PC-9 (cell line): ENCODE measurements at regions of chr21 and their contacts with region 1.

Region 1: GRCh38 chr21:15729674-15730483 is at the start of gene USP25:
- DNase-seq: peak; percentile 64 to 83
- H3K4me3 ChIP-seq: peak within 1 kb of the TSS; percentile 79
- H3K27ac ChIP-seq: peak within 1 kb of the TSS; percentile 68
- H3K4me1 ChIP-seq: peaks cover 16% of the 10 kb centered on the region; the same call in 1 of the 2 replicates
- H3K27me3 ChIP-seq: no peaks in the 10 kb centered on the region
- CTCF ChIP-seq: no peak
- total RNA-seq, gene USP25: 26.0 and 30.9 TPM in 2 replicates

Region 2: DNA sequence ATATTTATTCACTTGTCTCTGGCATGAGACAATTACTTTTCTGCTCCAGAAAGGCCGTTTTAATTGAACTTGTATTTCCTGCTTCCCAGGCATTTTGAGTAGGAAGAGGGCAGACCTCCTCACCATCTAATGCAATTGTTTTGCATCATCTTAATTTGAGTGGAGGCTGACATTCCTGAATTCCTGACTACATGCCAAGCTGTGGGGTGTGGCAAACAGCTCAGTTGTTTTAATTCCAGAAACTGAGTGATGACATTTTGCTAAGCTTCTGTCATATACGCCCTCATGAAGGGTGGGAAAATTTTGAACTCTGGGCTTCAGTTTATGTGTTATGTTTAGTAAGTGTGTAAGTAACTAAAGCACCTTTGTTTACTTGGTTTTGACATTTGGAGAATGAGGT is 125.5 kb before region 1 on chr21:
- CTCF ChIA-PET with region 1: no interaction called
- POLR2A ChIA-PET with region 1: interaction called, 5 read pairs
- intact Hi-C with region 1: loop called (anchors 5 kb)
- DNase-seq: peak; percentile 61 to 82
- H3K4me3 ChIP-seq: no peak overlapping the region
- H3K27ac ChIP-seq: peak overlapping the region; percentile 50
- H3K4me1 ChIP-seq: peaks cover 14% of the 10 kb centered on the region
- H3K27me3 ChIP-seq: no peaks in the 10 kb centered on the region
- CTCF ChIP-seq: no peak

Region 3: DNA sequence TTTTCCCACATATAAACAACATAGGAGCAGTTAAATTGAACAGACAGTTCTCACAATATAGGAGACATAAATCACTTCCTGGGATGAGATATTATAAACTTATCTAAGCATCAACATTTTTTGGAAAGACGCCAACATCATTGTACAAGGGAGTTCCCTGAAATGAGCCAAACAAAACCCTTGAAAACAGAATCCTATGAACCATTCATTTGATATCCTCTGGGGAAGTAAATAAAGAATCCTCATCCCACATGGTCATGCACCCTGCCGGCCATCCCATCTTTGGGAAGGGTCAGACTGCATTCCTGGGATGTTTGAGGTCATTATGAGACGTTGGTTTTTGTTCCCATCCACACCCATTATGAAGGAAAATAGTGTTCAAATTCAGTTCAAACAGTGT is 111.9 kb before region 1 on chr21:
- CTCF ChIA-PET with region 1: no interaction called
- POLR2A ChIA-PET with region 1: no interaction called
- intact Hi-C with region 1: loop called (anchors 1 kb)
- DNase-seq: peak; percentile 57 to 61
- H3K4me3 ChIP-seq: no peak overlapping the region
- H3K27ac ChIP-seq: peak overlapping the region; percentile 52
- H3K4me1 ChIP-seq: peaks cover 13% of the 10 kb centered on the region
- H3K27me3 ChIP-seq: no peaks in the 10 kb centered on the region
- CTCF ChIP-seq: no peak

Region 4: DNA sequence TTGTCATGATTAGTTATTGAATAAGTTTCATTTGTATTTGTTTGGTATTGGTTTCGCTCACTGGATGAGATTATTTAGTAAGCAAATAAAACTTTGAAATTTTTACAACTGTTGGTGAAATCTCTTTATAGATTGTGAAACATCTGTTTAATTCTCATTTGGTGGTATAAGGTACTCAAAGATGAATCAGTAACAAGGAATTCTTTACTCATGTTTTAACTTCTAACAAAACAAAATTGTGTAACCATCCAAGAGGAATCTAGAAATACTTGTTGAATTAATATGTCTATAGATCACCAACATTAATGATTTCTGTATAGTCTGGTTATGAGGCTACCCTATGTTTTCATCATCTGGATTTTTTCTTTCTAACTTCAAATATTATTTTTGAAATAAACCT is 62.9 kb before region 1 on chr21:
- CTCF ChIA-PET with region 1: no interaction called
- POLR2A ChIA-PET with region 1: interaction called, 5 read pairs
- intact Hi-C with region 1: loop called (anchors 5 kb)
- DNase-seq: peak in 1 of 2 experiments; percentile 92
- H3K4me3 ChIP-seq: no peak overlapping the region
- H3K27ac ChIP-seq: peak overlapping the region; percentile 88
- H3K4me1 ChIP-seq: peaks cover 25% of the 10 kb centered on the region
- H3K27me3 ChIP-seq: no peaks in the 10 kb centered on the region
- CTCF ChIP-seq: no peak

Region 5: DNA sequence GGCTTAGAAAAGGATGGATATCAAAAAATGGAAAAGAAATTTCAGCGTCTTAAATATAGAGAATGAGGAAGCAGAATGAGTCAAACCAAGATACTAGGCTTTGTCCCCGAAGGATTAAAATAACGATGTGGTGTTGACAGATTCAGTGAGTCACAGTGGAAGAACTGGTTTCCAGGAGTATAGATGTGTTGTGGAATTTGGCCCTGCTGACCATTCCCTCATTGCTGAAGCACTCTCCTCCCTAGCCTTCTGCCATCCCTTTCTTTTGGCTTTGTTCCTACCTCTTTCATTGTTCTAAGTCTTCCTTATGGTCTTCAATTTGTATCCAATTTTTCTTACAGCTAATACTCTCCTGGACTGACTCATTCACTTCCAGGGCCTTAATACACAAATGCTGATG is 23.2 kb before region 1 on chr21:
- CTCF ChIA-PET with region 1: interaction called, 3 read pairs
- POLR2A ChIA-PET with region 1: no interaction called
- intact Hi-C with region 1: loop called (anchors 1 kb)
- DNase-seq: peak; percentile 59 to 92
- H3K4me3 ChIP-seq: no peak overlapping the region
- H3K27ac ChIP-seq: peak overlapping the region; percentile 60
- H3K4me1 ChIP-seq: peaks cover 19% of the 10 kb centered on the region
- H3K27me3 ChIP-seq: no peaks in the 10 kb centered on the region
- CTCF ChIP-seq: no peak